HepG2 (cell line): ENCODE measurements at regions of chr12 and their contacts with region 1.

Region 1: GRCh38 chr12:66352197-66352596 is 49.9 kb downstream of the HELB start:
- DNase-seq: peak; percentile 18
- ATAC-seq: peak; percentile 93
- H3K4me3 ChIP-seq: no peak overlapping the region
- H3K27ac ChIP-seq: no peak overlapping the region
- H3K4me1 ChIP-seq: no peaks in the 10 kb centered on the region
- H3K27me3 ChIP-seq: peaks cover 0 to 4% of the 10 kb centered on the region in 2 experiments; a peak in 1 of 5 replicates
- CTCF ChIP-seq: peak; percentile 73
- EP300 ChIP-seq: no peak
- POLR2A ChIP-seq: no peak
- RAD21 ChIP-seq: no peak

Region 2: DNA sequence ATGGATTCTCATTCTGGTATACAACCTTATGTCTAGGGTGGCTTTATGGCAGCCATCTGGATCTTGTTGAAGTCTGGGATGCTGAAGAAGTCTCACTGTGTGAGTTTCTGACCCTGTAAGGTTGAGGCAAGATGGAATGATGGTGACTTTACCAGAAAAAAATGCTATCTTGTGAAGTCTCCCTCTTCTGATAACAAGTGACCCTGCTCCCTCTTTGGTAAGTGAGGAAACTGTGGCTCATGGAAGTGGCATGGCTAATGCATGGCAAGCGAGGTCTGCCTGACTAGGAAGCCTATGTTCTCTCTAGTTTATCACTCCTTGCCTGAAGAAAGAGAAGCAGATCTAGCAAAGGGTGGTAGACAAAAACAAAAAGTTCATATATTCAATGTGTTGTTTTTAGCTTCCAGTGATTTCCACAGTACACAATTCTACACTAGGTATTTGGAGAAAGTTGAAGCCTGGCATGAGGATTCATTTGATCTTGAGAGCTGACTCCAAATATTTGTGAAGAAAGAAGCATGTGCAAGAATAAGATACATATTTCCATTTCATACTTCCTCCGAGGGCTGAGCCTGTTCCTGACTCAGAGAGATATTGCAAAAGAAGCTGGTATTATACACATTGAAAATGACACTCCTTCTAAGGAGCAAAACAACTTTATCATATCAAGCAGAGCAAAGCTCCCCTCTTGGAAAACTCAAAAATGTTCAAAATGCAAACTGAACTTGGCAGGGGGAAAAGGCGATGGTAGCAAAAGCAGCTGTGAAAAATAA is 13.7 kb after region 1 on chr12:
- CTCF ChIA-PET with region 1: no interaction called
- POLR2A ChIA-PET with region 1: no interaction called
- in situ Hi-C with region 1: no loop called
- intact Hi-C with region 1: no loop called
- DNase-seq: no peak
- ATAC-seq: no peak
- H3K4me3 ChIP-seq: no peak overlapping the region
- H3K27ac ChIP-seq: no peak overlapping the region
- H3K4me1 ChIP-seq: no peaks in the 10 kb centered on the region
- H3K27me3 ChIP-seq: peaks cover 0 to 6% of the 10 kb centered on the region in 2 experiments; a peak in 1 of 5 replicates
- CTCF ChIP-seq: no peak
- EP300 ChIP-seq: no peak
- POLR2A ChIP-seq: no peak
- RAD21 ChIP-seq: no peak

Region 3: DNA sequence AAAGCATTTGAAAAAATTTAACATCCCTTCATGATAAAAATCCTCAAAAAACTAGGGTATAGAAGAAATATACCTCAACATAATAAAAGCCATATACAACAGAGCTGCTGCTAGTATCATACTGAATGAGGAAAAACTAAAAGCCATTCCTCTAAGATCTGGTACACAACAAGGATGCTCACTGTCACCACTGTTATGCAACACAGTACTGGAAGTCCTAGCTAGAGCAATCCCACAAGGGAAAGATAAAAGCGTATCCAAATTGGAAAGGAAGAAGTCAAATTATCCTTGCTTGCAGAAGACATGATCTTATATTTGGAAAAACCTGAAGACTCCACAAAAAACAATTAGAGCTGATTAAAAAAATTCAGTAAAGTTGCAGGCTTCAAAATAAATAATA is 65.0 kb after region 1 on chr12:
- CTCF ChIA-PET with region 1: no interaction called
- POLR2A ChIA-PET with region 1: no interaction called
- in situ Hi-C with region 1: no loop called
- intact Hi-C with region 1: no loop called
- DNase-seq: no peak
- ATAC-seq: no peak
- H3K4me3 ChIP-seq: no peak overlapping the region
- H3K27ac ChIP-seq: no peak overlapping the region
- H3K4me1 ChIP-seq: no peaks in the 10 kb centered on the region
- H3K27me3 ChIP-seq: no peaks in the 10 kb centered on the region
- CTCF ChIP-seq: no peak
- EP300 ChIP-seq: no peak
- POLR2A ChIP-seq: no peak
- RAD21 ChIP-seq: no peak

Region 4: DNA sequence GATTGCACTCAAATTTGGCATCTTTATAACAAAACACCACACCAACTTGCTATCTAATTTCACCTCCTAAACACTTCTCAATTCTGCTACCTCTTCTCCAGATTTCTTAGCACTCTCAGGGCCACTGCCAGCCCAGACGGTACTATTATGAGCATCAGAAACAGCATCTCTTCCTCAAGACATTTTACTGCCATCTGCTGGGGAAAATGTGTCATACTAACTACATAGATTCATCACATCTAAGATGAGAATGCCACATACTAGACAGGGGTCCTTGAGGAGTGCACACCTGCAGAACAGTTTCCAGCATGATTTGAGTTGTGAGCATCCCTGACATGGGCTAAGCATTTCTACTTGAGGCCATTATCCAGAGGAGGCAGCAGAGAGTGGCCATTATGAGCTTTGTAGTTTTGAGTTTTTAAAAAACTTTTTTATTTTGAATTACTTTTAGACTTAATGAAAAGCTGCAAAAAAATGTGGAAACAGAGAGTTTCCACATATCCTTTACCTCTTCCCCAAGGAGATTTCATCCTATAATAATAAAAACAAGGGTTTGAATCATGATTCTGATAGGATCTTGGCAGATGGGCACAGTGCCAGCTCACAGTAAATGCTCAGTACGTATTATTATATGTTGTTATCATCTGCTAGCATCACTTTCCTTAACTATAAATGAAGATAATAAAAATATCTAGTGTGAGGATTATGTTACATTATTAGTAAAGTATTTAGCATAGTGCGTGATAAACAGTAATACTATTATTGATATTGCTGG is 341.9 kb after region 1 on chr12:
- CTCF ChIA-PET with region 1: no interaction called
- POLR2A ChIA-PET with region 1: no interaction called
- in situ Hi-C with region 1: no loop called
- intact Hi-C with region 1: loop called (anchors 5 kb)
- DNase-seq: peak; percentile 35
- ATAC-seq: peak; percentile 74
- H3K4me3 ChIP-seq: no peak overlapping the region
- H3K27ac ChIP-seq: no peak overlapping the region
- H3K4me1 ChIP-seq: no peaks in the 10 kb centered on the region
- H3K27me3 ChIP-seq: no peaks in the 10 kb centered on the region
- CTCF ChIP-seq: peak; percentile 66
- EP300 ChIP-seq: no peak
- POLR2A ChIP-seq: no peak
- RAD21 ChIP-seq: no peak